ENCODE measurements at regions of chr5 and their contacts with region 1.

Region 1: GRCh38 chr5:94524841-94525697 is 93.3 kb downstream of the KIAA0825 start:
- DNase-seq: peak in 1 of 2 donors; percentile 70
- ATAC-seq: peak; percentile 57 to 73 (median 72)
- H3K4me3 ChIP-seq: no peak overlapping the region
- H3K4me3 Mint-ChIP-seq: no peak overlapping the region
- H3K27ac ChIP-seq: no peak overlapping the region
- H3K27ac Mint-ChIP-seq: no peak overlapping the region
- H3K4me1 ChIP-seq: no peaks in the 10 kb centered on the region
- H3K4me1 Mint-ChIP-seq: no peaks in the 10 kb centered on the region
- H3K27me3 ChIP-seq: no peaks in the 10 kb centered on the region
- H3K27me3 Mint-ChIP-seq: no peaks in the 10 kb centered on the region
- CTCF ChIP-seq: peak; percentile 66

Region 2: DNA sequence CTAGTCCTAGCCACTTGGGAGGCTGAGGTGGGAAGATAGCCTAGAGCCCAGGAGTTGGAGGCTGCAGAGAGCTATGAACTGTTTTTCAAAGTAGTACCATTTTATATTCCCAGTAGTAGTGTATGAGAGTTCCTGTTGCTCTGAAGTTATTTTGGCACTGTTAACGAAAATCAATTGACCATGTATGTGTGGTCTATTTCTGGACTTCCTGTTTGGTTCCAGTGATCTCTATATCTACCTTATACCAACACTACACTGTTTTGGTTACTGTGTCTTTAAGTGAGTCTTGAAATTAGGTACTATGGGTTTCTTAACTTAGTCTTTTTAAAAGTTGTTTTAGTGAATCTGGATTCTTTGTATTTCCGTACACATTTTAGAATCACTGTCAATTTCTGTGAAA is 107.0 kb after region 1 on chr5:
- intact Hi-C with region 1: no loop called
- DNase-seq: no peak
- ATAC-seq: no peak
- H3K4me3 ChIP-seq: no peak overlapping the region
- H3K4me3 Mint-ChIP-seq: no peak overlapping the region
- H3K27ac ChIP-seq: no peak overlapping the region
- H3K27ac Mint-ChIP-seq: peak overlapping the region; percentile 62 to 67
- H3K4me1 ChIP-seq: peaks cover 4% of the 10 kb centered on the region
- H3K4me1 Mint-ChIP-seq: peaks cover 18 to 24% of the 10 kb centered on the region in 2 donors
- H3K27me3 ChIP-seq: no peaks in the 10 kb centered on the region
- H3K27me3 Mint-ChIP-seq: no peaks in the 10 kb centered on the region
- CTCF ChIP-seq: no peak

Region 3: DNA sequence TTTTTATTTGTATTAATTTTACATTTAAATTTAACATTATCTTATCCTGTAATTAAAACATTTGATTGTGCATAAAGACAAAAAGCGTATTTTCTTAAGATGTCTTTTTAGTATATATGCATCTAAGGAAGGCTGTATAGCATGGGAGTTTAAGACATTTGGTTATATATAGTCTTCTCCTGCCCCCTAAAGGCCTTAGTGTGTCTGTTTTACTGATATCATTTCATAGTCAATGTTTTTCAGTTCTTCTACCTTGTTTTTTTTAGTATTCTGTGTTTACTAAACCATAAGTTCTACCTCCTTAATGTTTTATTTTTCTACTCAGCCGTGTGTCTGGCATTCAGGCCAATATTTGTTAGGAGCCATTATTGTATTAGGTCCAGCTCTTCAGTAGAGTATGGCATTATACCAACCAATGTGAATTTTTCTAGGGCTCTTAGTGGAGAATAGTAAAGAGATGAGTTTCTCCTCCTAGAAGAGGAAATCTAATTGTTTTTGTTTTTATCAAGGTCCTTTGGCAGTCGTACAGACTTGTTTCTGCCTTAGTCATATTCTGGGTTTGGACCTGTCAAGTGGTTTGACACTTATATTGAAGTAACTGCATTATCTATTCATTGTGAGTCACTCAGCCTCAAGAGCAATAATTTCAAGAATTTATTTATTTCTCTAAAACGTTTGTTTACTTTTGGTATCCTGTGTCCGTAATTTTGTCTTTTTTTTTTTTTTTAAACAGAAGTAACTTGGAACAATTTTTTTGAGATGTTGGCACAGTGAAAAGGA is 168.2 kb after region 1 on chr5:
- intact Hi-C with region 1: loop called (anchors 1 kb)
- DNase-seq: peak in 1 of 2 donors; percentile 67
- ATAC-seq: peak; percentile 86 to 90 (median 87)
- H3K4me3 ChIP-seq: no peak overlapping the region
- H3K4me3 Mint-ChIP-seq: peak overlapping the region; percentile 3
- H3K27ac ChIP-seq: peak overlapping the region; percentile 31
- H3K27ac Mint-ChIP-seq: peak overlapping the region; percentile 57 to 66
- H3K4me1 ChIP-seq: no peaks in the 10 kb centered on the region
- H3K4me1 Mint-ChIP-seq: peaks cover 6% of the 10 kb centered on the region in 2 donors
- H3K27me3 ChIP-seq: no peaks in the 10 kb centered on the region
- H3K27me3 Mint-ChIP-seq: no peaks in the 10 kb centered on the region
- CTCF ChIP-seq: peak; percentile 47

Region 4: GRCh38 chr5:94740286-94740685 is 215.2 kb after region 1 on chr5:
- intact Hi-C with region 1: loop called (anchors 1 kb)
- DNase-seq: no peak
- ATAC-seq: no peak
- H3K4me3 ChIP-seq: no peak overlapping the region
- H3K4me3 Mint-ChIP-seq: no peak overlapping the region
- H3K27ac ChIP-seq: no peak overlapping the region
- H3K27ac Mint-ChIP-seq: no peak overlapping the region
- H3K4me1 ChIP-seq: no peaks in the 10 kb centered on the region
- H3K4me1 Mint-ChIP-seq: no peaks in the 10 kb centered on the region
- H3K27me3 ChIP-seq: no peaks in the 10 kb centered on the region
- H3K27me3 Mint-ChIP-seq: no peaks in the 10 kb centered on the region
- CTCF ChIP-seq: no peak

Region 5: GRCh38 chr5:94849821-94850736 is 325.0 kb after region 1 on chr5:
- intact Hi-C with region 1: loop called (anchors 1 kb)
- DNase-seq: peak in 1 of 2 donors; percentile 71
- ATAC-seq: peak; percentile 80 to 93 (median 89)
- H3K4me3 ChIP-seq: no peak overlapping the region
- H3K4me3 Mint-ChIP-seq: no peak overlapping the region
- H3K27ac ChIP-seq: no peak overlapping the region
- H3K27ac Mint-ChIP-seq: no peak overlapping the region
- H3K4me1 ChIP-seq: no peaks in the 10 kb centered on the region
- H3K4me1 Mint-ChIP-seq: no peaks in the 10 kb centered on the region
- H3K27me3 ChIP-seq: no peaks in the 10 kb centered on the region
- H3K27me3 Mint-ChIP-seq: no peaks in the 10 kb centered on the region
- CTCF ChIP-seq: peak; percentile 79

Region 6: GRCh38 chr5:95130941-95131340 is 605.9 kb after region 1 on chr5:
- intact Hi-C with region 1: no loop called
- DNase-seq: no peak
- ATAC-seq: no peak
- H3K4me3 ChIP-seq: no peak overlapping the region
- H3K4me3 Mint-ChIP-seq: no peak overlapping the region
- H3K27ac ChIP-seq: no peak overlapping the region
- H3K27ac Mint-ChIP-seq: no peak overlapping the region
- H3K4me1 ChIP-seq: no peaks in the 10 kb centered on the region
- H3K4me1 Mint-ChIP-seq: no peaks in the 10 kb centered on the region
- H3K27me3 ChIP-seq: no peaks in the 10 kb centered on the region
- H3K27me3 Mint-ChIP-seq: peaks cover under 1 to 6% of the 10 kb centered on the region in 2 donors
- CTCF ChIP-seq: no peak

Measured in natural killer cell (primary cell).